ENCODE measurements at regions of chr17 and their contacts with region 1.

Region 1: GRCh38 chr17:3474212-3474611 is 1.6 kb upstream of the ASPA start:
- DNase-seq: no peak
- ATAC-seq: no peak
- H3K4me3 ChIP-seq: no peak overlapping the region
- H3K4me3 Mint-ChIP-seq: no peak overlapping the region
- H3K27ac ChIP-seq: no peak overlapping the region
- H3K27ac Mint-ChIP-seq: no peak overlapping the region
- H3K4me1 ChIP-seq: no peaks in the 10 kb centered on the region
- H3K4me1 Mint-ChIP-seq: no peaks in the 10 kb centered on the region
- H3K27me3 ChIP-seq: no peaks in the 10 kb centered on the region
- H3K27me3 Mint-ChIP-seq: peaks cover 8% of the 10 kb centered on the region
- CTCF ChIP-seq: no peak

Region 2: DNA sequence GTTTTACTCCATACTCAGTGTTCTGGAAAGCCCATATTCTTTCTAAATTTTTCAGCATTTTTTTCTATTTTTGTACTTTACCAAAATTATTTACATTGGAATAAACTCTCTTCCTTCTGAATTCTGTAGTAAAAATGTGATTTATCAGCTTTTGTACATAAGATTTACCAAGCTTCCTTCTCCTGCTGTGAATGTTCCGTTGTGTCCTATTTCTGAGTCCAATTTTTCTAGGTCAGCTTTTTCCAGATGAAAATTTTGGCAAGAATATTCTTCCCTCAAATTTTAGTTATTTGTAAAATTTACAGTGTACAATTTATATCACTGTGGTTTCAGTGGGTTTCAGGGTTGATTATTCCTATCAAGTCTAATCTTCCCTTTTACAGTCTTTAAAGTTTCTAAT is 29.1 kb after region 1 on chr17:
- CTCF ChIA-PET with region 1: no interaction called
- POLR2A ChIA-PET with region 1: no interaction called
- intact Hi-C with region 1: loop called in 1 of 2 experiments (anchors 1 kb)
- DNase-seq: no peak
- ATAC-seq: no peak
- H3K4me3 ChIP-seq: no peak overlapping the region
- H3K4me3 Mint-ChIP-seq: no peak overlapping the region
- H3K27ac ChIP-seq: no peak overlapping the region
- H3K27ac Mint-ChIP-seq: no peak overlapping the region
- H3K4me1 ChIP-seq: no peaks in the 10 kb centered on the region
- H3K4me1 Mint-ChIP-seq: no peaks in the 10 kb centered on the region
- H3K27me3 ChIP-seq: no peaks in the 10 kb centered on the region
- H3K27me3 Mint-ChIP-seq: peaks cover 7% of the 10 kb centered on the region
- CTCF ChIP-seq: no peak

Region 3: GRCh38 chr17:3983606-3984484 is 509.6 kb after region 1 on chr17:
- CTCF ChIA-PET with region 1: no interaction called
- POLR2A ChIA-PET with region 1: no interaction called
- intact Hi-C with region 1: no loop called
- DNase-seq: no peak
- ATAC-seq: no peak
- H3K4me3 ChIP-seq: no peak overlapping the region
- H3K4me3 Mint-ChIP-seq: no peak overlapping the region
- H3K27ac ChIP-seq: no peak overlapping the region
- H3K27ac Mint-ChIP-seq: no peak overlapping the region
- H3K4me1 ChIP-seq: no peaks in the 10 kb centered on the region
- H3K4me1 Mint-ChIP-seq: peaks cover 6% of the 10 kb centered on the region
- H3K27me3 ChIP-seq: no peaks in the 10 kb centered on the region
- H3K27me3 Mint-ChIP-seq: no peaks in the 10 kb centered on the region
- CTCF ChIP-seq: no peak